Activated CD4-positive, alpha-beta T cell treated with anti-CD3 and anti-CD28 coated beads, Interleukin-2, amount 10 ng/mL, durations not matched to agents 24 days and 14 days (primary cell): ENCODE measurements at regions of chr13 and their contacts with region 1.

Region 1: DNA sequence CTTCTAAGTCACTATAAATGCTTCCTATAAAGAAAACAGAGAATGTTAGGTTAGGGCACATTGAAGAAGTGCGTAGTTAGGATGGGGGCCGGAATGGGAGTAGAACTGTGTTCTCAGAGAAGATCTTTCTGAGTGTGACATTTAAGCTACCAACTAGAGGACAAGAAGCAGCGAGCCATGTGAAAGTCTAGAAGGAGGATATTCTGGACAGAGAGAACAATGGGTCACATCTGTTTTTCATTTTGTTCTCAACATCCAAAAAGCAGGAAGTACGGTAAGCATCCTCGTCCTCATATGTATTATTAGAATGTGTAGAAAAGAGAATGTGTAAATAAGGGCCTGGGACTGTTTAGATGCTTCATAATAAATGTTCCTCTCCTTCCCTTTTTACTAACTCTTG is 44.5 kb upstream of the PARP4 start:
- DNase-seq: no peak
- H3K4me3 Mint-ChIP-seq: no peak overlapping the region
- H3K27ac Mint-ChIP-seq: no peak overlapping the region
- H3K4me1 Mint-ChIP-seq: peaks cover 12% of the 10 kb centered on the region
- H3K27me3 Mint-ChIP-seq: peaks cover 44% of the 10 kb centered on the region

Region 2: DNA sequence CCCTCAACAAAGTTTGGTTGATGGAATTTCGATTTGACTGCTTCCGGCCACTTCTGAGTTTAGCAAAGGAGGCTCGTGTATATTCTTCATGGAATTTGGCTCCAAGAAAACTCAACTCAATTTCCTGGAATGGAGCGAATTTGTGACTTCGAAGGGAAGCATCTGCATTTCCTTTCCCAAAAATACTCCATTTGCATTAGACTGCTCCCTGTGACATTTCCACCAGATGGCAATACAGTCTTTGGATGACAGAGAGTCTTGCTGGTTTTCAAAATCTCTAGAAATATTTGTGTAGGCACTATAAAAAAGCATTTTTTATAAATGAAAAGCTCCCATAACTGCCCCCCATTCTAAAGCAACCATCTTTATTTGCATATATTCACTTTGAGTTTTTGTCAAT is 243.6 kb before region 1 on chr13:
- intact Hi-C with region 1: loop called (anchors 5 kb)
- DNase-seq: no peak
- H3K4me3 Mint-ChIP-seq: no peak overlapping the region
- H3K27ac Mint-ChIP-seq: no peak overlapping the region
- H3K4me1 Mint-ChIP-seq: no peaks in the 10 kb centered on the region
- H3K27me3 Mint-ChIP-seq: peaks cover 10% of the 10 kb centered on the region